Left cardiac atrium (tissue), 4 donors: ENCODE measurements at regions of chr17 and their contacts with region 1.

Region 1: GRCh38 chr17:35695613-35696012 is 35.8 kb upstream of the RASL10B start:
- DNase-seq: no peak
- ATAC-seq: peak in 1 of 2 donors; percentile 23

Region 2: DNA sequence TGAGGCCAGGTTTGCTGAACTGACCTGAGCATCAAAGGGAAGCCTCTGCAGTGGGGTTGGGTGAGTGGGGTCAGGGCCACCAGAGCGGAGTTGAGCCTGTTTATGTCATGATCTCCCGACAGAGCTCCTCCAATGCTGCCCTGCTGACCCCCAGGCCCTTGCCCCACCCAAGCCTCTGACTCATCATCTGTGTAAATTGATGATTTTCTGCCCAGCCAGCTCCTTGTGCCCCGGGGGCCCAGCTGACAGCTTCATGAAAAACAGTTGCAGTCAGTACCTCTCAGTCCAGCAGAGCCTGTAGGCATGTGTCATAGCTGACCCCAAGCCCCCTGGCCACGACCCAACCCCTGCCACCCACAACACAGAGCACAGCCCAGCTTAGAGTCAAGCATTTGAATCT is 869.3 kb before region 1 on chr17:
- intact Hi-C with region 1: no loop called
- DNase-seq: no peak
- ATAC-seq: no peak

Region 3: GRCh38 chr17:35543856-35544255 is 151.8 kb before region 1 on chr17:
- intact Hi-C with region 1: no loop called
- DNase-seq: no peak
- ATAC-seq: no peak

Region 4: DNA sequence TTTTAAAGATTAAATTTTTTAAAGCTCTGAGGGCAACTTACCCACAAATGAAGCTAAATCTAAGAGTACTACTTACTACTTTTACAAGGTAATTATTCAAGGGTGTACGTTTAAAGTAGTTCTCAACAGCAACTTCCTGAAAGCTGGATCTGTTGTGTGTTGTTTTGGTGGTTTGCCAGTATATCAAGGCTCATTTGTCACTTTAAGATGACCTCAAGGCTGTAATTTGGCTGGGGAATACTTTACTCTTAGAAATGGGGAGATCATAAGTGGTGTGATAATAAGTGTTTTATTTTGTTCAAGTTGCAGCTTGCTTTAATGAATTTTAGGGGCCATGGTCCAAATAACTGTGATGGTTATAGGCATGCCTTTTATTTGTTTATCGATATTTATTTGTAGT is 78.1 kb before region 1 on chr17:
- intact Hi-C with region 1: no loop called
- DNase-seq: no peak
- ATAC-seq: peak in 1 of 2 donors; percentile 47

Region 5: DNA sequence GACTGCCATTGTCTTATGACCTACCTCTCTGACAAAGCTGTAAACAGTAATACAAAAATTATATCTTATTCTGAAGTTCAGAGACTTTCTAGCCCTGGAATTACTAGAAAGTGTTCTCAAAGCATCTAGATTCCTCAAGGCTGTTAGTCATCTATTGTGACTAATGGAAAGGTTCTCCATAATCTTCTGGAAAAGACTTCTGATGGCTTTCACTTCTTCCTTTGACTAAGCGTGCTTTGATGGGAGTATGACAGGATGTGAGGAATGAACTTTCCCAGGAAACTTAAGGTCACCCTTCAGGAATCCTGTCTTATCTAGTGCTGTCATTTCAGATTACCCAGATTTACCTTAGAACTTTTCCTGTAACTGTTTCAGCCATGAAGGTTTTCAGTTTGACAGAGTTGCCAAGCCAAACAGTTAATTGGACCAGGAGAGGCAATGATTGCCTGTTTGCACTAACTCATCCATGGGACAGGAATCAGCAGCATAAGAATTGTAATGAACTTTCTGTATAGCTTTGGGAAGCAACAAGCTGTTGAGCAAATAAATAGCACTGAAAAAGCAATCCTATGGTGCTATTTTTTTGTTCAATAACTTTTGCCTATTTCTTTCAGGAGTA is 65.0 kb before region 1 on chr17:
- intact Hi-C with region 1: loop called in 1 of 2 experiments (anchors 10 kb)
- DNase-seq: no peak
- ATAC-seq: peak in 1 of 2 donors; percentile 68